Right ventricle myocardium inferior (tissue), 1 donor: ENCODE measurements at regions of chr1 and their contacts with region 1.

Region 1: DNA sequence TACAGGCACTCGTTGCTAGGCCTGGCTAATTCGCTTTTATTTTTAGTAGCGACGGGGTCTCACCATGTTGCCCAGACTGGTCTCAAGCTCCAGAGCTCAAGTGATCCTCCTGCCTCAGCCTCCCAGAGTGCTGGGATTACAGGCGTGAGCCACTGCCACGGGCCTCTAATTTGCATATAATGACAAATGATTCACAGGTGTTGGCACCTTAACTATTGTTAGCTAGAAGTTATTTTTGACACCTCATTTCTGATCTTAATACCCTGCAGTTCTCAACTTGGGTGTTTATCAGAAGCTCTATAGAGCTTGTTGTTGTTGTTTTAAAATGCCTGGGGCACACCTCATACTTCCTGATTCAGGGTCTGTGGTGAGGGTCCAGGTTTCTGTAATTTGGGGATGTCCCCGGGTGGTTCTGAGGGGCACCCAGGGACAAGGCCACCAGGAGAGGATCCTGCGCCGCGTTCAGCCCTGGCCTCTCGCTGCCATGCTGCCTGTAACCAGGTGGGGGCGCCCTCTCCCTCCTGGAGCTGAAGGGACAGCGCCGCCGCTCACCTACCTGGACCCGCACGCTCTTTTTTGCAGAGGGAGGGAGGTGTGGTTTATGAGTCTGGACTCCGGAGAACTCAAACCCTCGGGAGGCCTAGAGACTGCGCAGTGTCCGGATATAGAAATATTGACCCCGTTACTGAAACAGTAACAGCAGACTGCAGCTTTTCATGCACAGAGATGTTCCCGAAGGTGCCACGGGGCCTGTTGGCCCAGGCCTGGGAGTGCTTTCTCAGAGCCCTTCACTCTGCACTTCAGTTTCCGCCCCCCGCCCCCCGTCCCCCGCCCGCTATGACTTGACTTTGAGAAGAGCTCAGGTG is 23.0 kb upstream of the NEK2 start:
- DNase-seq: peak; percentile 95
- ATAC-seq: peak; percentile 87

Region 2: GRCh38 chr1:211566431-211567025 is 131.9 kb before region 1 on chr1:
- intact Hi-C with region 1: no loop called
- DNase-seq: no peak
- ATAC-seq: no peak

Region 3: DNA sequence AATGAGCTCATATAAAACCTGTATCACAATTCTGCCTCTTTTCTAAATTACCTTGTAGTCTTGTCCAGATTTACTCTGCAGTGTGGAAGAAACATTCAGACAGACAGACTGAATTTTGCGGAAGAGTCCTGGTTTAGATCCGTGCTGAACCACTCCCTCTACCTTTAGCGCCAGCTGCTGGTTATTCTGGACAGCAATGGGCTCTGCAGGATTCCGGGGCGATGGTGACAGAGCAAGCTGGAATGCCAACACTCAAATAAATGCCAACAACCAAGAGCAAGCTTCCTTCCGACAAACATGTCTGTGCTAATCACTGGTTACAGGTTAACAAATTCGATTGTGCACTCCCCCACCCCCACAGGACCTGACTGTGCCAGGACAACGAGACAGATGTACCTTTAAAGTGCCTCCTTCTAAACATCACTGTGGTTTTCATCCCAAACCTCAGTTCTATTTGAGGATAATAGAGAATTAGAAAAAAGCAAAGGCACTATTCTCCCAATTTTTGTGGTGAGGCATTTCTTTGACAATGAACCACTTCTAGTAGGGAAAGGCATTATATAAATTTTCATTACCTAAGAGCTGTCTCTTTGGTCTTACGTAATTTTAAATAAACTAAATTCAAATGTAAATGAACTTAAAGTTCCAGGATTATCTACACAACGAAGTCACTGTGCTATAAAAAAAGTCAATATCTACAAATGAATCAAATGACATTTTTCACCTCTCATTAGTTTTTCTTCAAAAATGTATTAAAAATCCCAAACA is 246.5 kb after region 1 on chr1:
- intact Hi-C with region 1: loop called (anchors 2 kb)
- DNase-seq: no peak
- ATAC-seq: peak; percentile 72